PC-3 (cell line): ENCODE measurements at regions of chr6 and their contacts with region 1.

Region 1: GRCh38 chr6:97053643-97054411 is 129.3 kb downstream of the KLHL32 start:
- DNase-seq: peak; percentile 41
- ATAC-seq: no peak
- H3K4me3 ChIP-seq: no peak overlapping the region
- H3K27ac ChIP-seq: no peak overlapping the region
- H3K4me1 ChIP-seq: no peaks in the 10 kb centered on the region
- H3K27me3 ChIP-seq: peaks cover 4% of the 10 kb centered on the region; the same call in 1 of the 2 replicates
- CTCF ChIP-seq: peak; percentile 65

Region 2: GRCh38 chr6:98033617-98034016 is 979.8 kb after region 1 on chr6:
- CTCF ChIA-PET with region 1: interaction called, 12 read pairs
- POLR2A ChIA-PET with region 1: no interaction called
- intact Hi-C with region 1: no loop called
- DNase-seq: no peak
- ATAC-seq: no peak
- H3K4me3 ChIP-seq: no peak overlapping the region
- H3K27ac ChIP-seq: no peak overlapping the region
- H3K4me1 ChIP-seq: no peaks in the 10 kb centered on the region
- H3K27me3 ChIP-seq: peaks cover 36% of the 10 kb centered on the region
- CTCF ChIP-seq: no peak